HepG2 (cell line): ENCODE measurements at regions of chr14 and their contacts with region 1.

Region 1: GRCh38 chr14:47392326-47392725 is 283.1 kb downstream of the MDGA2 start:
- DNase-seq: no peak
- ATAC-seq: no peak
- H3K4me3 ChIP-seq: no peak overlapping the region
- H3K27ac ChIP-seq: no peak overlapping the region
- H3K4me1 ChIP-seq: no peaks in the 10 kb centered on the region
- H3K27me3 ChIP-seq: no peaks in the 10 kb centered on the region; a peak in 1 of 5 replicates
- CTCF ChIP-seq: no peak
- EP300 ChIP-seq: no peak
- POLR2A ChIP-seq: no peak
- RAD21 ChIP-seq: no peak

Region 2: DNA sequence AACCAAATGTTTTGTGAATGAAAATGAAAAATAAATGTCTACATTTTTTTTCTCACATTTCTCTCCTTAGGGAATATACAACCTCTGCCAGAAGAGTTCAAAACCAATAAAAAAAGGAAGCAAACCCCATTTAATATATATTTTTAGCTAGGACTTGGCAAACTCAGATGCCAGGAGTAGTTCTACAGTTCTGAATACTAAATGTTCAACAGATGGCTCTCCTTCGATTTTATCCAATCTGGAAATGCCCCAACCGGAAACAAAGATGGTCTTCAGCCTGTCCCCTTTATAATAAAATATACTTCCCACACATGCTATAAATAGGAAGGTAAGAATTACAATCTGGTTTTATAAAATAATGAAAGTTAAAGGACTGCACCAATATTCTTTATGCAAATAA is 47.3 kb before region 1 on chr14:
- CTCF ChIA-PET with region 1: no interaction called
- POLR2A ChIA-PET with region 1: no interaction called
- in situ Hi-C with region 1: no loop called
- intact Hi-C with region 1: loop called (anchors 2 kb)
- DNase-seq: no peak
- ATAC-seq: no peak
- H3K4me3 ChIP-seq: no peak overlapping the region
- H3K27ac ChIP-seq: no peak overlapping the region
- H3K4me1 ChIP-seq: no peaks in the 10 kb centered on the region
- H3K27me3 ChIP-seq: no peaks in the 10 kb centered on the region
- CTCF ChIP-seq: no peak
- EP300 ChIP-seq: no peak
- POLR2A ChIP-seq: no peak
- RAD21 ChIP-seq: no peak

Region 3: GRCh38 chr14:47466916-47467315 is 74.6 kb after region 1 on chr14:
- CTCF ChIA-PET with region 1: no interaction called
- POLR2A ChIA-PET with region 1: no interaction called
- in situ Hi-C with region 1: no loop called
- intact Hi-C with region 1: no loop called
- DNase-seq: no peak
- ATAC-seq: no peak
- H3K4me3 ChIP-seq: no peak overlapping the region
- H3K27ac ChIP-seq: no peak overlapping the region
- H3K4me1 ChIP-seq: no peaks in the 10 kb centered on the region
- H3K27me3 ChIP-seq: no peaks in the 10 kb centered on the region
- CTCF ChIP-seq: no peak
- EP300 ChIP-seq: no peak
- POLR2A ChIP-seq: no peak
- RAD21 ChIP-seq: no peak